ENCODE measurements at regions of chr1 and their contacts with region 1.

Region 1: DNA sequence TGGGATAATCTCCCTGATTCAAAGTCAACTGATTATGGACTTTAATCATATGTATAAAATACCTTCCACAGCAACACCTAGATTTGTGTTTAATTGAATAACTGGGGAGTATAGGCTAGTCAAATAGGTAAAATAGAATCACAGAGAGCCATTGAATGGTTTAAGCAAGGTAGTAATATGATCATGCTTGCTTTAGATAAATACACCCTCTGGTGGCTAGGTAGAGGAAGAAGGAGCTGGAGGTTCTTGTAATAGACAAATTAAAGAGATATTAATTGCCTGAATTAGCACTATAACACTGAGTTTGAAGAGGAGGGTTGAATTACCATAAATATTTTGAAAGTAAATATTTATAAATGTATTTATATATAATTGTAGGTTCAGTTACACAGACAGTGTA is 40.3 kb downstream of the DIRAS3 start:
- DNase-seq: no peak
- ATAC-seq: peak in 2 of 4 donors; percentile 47 to 64
- H3K4me3 ChIP-seq: no peak overlapping the region
- H3K27ac ChIP-seq: no peak overlapping the region
- H3K4me1 ChIP-seq: no peaks in the 10 kb centered on the region
- H3K27me3 ChIP-seq: no peaks in the 10 kb centered on the region
- CTCF ChIP-seq: peak in 10 of 12 donors; percentile 17 to 55 (median 38)
- POLR2A ChIP-seq: no peak

Region 2: DNA sequence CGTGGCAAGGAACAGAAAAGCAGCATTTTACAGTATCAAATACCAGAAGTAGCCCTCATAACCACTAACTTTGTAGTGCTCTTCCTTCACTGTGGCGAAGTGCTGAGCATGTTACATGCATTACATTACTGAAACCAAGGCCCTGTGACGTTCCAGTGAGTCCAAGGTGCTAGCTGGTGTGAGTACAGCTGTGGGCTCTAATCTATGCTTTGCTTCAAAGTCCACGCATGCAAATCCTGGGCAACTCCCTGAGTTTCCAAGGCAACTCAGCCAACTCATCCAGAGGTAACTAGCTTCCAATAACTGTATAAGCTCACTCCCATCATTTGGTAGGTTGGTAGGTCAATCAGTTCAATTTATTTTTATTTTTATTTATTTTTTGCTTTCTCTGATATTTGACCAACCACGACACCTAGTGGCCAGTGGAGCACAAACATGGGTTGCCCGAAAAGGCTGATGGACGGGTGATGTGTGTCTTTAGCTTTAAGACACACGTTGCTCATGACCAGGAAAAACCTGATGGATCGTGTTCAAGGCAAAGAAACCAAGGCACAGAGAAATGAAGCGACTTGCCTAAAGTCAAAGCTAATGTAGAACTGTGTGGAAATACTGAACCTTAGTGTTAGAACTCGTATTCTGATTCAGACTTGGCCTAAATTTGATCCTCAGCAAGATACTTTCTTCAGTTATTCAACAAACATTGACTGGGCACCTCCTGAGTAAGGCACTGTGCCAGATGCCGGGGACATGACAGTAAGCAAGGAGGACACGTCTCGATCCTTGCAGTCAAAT is 249.9 kb before region 1 on chr1:
- intact Hi-C with region 1: loop called in 5 of 10 experiments (anchors 5 to 10 kb)
- DNase-seq: peak in 4 of 5 donors; percentile 38 to 61 (median 45)
- ATAC-seq: peak; percentile 59 to 77 (median 68)
- H3K4me3 ChIP-seq: no peak overlapping the region
- H3K27ac ChIP-seq: peak overlapping the region in 7 of 12 donors; percentile 5 to 34 (median 21)
- H3K4me1 ChIP-seq: peaks cover 0 to 32% (median 16%) of the 10 kb centered on the region in 12 donors
- H3K27me3 ChIP-seq: no peaks in the 10 kb centered on the region
- CTCF ChIP-seq: peak; percentile 83 to 95 (median 90)
- POLR2A ChIP-seq: no peak

Region 3: DNA sequence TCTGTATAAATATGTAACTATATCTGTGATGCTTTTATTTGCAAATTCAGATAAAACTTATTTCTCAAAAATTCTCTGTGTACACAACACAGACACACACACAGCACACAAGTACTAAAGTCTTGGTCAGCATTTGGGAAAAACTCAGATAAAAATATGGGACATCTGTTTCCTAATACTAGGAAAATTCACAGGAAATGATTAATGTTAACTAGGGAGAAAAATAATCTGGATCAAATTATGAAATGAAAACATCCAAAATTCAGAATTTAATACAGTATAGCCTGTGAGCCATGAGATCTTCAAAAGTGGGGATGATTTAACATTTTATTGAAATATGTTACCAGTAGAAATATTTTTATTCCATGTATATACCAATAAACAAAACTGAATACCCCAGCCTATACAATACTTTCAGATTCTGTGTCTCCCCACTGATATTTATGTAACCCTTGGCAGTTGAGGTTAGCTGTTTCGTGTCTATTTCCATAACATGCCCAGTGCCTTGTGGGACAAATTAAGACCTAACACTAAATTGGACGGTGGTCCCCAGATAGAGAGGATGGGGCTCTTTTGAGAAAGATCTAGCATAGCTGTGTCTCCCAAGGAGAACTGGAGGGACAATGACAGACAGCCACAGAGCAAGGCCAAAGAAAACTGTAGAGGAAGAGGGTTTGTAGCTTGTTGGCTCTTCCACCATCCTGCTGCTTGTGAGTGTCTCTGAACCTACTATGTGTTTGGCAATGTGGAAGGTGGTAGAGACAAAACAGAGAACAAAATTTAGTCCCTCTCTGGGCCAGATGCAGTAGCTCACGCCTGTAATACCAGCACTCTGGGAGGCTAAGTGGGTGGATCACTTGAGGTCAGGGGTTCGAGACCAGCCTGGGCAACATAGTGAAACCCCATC is 224.0 kb before region 1 on chr1:
- intact Hi-C with region 1: loop called in 1 of 10 experiments (anchors 10 kb)
- DNase-seq: no peak
- ATAC-seq: peak in 2 of 4 donors; percentile 47 to 76
- H3K4me3 ChIP-seq: no peak overlapping the region
- H3K27ac ChIP-seq: peak overlapping the region in 5 of 12 donors; percentile 10 to 69 (median 50)
- H3K4me1 ChIP-seq: peaks cover 0 to 34% (median 13%) of the 10 kb centered on the region in 12 donors
- H3K27me3 ChIP-seq: no peaks in the 10 kb centered on the region
- CTCF ChIP-seq: no peak
- POLR2A ChIP-seq: no peak

Region 4: DNA sequence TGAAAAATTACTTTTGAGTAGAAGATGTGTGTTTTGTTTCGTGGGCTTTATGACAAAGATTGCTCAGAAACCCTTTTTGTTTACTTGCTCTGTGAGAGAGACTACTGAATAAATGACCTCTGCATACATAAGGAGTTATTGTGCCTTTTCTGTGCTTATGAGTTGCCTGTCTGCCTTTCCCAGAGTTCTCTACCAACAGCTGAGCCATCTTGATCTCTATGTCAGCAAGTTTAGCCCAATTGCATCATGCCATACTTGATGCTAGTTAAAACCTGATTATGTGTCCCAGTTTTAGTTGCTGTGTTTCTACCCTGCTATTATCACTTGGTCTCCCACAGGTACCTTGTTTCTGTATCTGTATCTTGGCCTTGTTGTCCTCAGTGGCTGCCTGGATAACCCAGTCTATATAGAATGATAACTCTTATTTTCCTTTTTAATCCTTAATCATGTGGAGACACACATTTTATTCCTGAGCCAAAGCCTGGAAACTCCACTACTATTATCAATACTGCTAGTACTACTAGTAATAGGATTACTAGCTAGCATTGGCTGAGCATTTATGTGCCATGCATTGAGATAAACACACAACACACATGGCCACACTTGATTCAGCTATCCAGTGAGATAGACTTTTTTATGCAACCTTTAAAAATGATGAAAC is 148.1 kb before region 1 on chr1:
- intact Hi-C with region 1: no loop called
- DNase-seq: no peak
- ATAC-seq: no peak
- H3K4me3 ChIP-seq: no peak overlapping the region
- H3K27ac ChIP-seq: no peak overlapping the region
- H3K4me1 ChIP-seq: peaks cover 0 to 10% (median 0%) of the 10 kb centered on the region in 12 donors
- H3K27me3 ChIP-seq: no peaks in the 10 kb centered on the region
- CTCF ChIP-seq: no peak
- POLR2A ChIP-seq: no peak

Region 5: GRCh38 chr1:67880056-67880601 is 130.0 kb before region 1 on chr1:
- intact Hi-C with region 1: no loop called
- DNase-seq: peak in 1 of 5 donors; percentile 36
- ATAC-seq: peak; percentile 58 to 93 (median 84)
- H3K4me3 ChIP-seq: no peak overlapping the region
- H3K27ac ChIP-seq: no peak overlapping the region
- H3K4me1 ChIP-seq: peaks cover 0 to 5% (median 0%) of the 10 kb centered on the region in 12 donors
- H3K27me3 ChIP-seq: no peaks in the 10 kb centered on the region
- CTCF ChIP-seq: no peak
- POLR2A ChIP-seq: no peak

Region 6: DNA sequence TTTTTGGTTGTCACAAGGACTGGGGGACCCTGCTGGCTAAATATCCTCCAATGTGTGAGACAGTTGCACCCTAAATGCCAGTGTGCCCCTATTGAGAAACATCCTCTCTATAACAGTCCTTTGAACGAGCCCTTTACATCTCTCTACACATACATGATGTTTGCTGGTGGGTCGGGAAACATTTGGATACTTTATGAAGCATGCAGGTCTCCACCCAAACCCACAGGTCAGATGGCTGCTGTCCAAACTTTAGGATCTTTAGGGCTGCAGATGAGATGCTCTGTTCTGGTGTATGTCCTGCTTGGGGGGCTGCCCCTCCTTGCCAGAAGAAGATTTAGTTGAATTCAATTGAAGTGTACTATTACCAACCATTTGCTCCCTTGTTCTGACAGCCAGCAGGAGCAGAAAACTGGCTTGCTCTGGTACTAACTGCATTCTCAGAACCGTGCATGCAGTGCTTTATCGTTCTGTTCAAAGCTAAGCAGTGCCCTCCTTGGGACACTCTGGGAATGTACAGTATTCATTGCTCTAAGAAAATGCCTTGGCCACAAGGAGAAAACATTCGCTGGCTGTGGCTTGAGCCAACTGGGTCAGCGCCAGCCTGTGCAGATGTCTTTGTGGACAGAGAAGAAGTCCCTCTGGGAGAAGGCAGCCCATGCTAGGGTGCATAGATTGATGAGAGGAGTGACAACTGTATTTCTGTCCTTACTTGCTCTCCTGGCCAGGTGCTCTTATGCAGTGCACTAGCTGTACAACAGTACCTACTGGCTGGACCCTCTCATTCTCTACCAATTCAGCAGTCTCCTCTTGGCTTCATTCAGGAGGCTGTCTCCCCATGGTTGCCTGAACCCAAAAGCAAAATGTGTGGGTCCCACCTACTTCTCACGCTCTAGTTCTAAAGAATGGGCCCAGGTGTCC is 101.7 kb after region 1 on chr1:
- intact Hi-C with region 1: loop called in 1 of 10 experiments (anchors 5 kb)
- DNase-seq: peak; percentile 57 to 80 (median 70)
- ATAC-seq: peak; percentile 82 to 91 (median 88)
- H3K4me3 ChIP-seq: no peak overlapping the region
- H3K27ac ChIP-seq: no peak overlapping the region
- H3K4me1 ChIP-seq: peaks cover 0 to 28% (median 16%) of the 10 kb centered on the region in 12 donors
- H3K27me3 ChIP-seq: no peaks in the 10 kb centered on the region
- CTCF ChIP-seq: peak; percentile 25 to 73 (median 48)
- POLR2A ChIP-seq: no peak